ENCODE measurements at regions of chr11 and their contacts with region 1.

Region 1: DNA sequence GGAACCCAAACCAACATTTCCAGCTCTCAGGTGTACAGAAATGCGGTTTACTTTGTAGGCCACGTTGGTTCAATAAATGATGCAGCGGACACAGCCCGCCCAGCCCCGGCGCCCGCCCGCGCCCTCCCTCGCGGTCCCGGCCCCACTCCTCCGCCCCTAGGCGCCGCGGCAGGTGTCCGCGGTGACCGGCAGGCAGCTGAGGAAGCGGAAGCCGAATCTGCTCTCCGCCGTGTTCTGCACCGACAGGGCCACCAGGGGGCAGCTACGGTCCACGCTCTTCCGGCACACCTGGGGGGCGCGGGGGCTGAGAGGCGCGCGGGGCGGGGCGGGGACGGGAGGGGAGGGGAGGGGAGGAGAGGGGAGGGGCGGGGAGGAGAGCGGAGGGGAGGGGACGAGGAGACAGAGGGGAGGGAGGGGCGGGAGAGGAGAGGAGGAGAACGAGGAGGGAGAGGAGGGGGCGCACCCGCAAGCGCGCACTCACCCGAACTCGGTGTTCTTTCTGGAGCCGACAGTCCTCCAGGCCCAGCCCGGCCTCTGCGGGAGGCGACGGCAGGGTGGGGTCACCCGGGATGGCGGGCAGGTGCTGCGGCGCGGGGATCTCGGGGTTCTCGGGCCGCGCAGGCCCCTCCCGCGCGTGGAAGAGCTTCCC is 5.6 kb downstream of the LMNTD2 start:
- DNase-seq: peak; percentile 74
- H3K4me3 Mint-ChIP-seq: peak overlapping the region; percentile 39
- H3K27ac Mint-ChIP-seq: no peak overlapping the region
- H3K4me1 Mint-ChIP-seq: peaks cover 4% of the 10 kb centered on the region
- H3K27me3 Mint-ChIP-seq: peaks cover 3% of the 10 kb centered on the region

Region 2: GRCh38 chr11:568306-569157 is 13.6 kb after region 1 on chr11:
- CTCF ChIA-PET with region 1: interaction called, 18 read pairs
- intact Hi-C with region 1: loop called (anchors 1 kb)
- DNase-seq: peak; percentile 89
- H3K4me3 Mint-ChIP-seq: peak overlapping the region; percentile 71
- H3K27ac Mint-ChIP-seq: no peak overlapping the region
- H3K4me1 Mint-ChIP-seq: peaks cover 2% of the 10 kb centered on the region
- H3K27me3 Mint-ChIP-seq: no peaks in the 10 kb centered on the region

Region 3: DNA sequence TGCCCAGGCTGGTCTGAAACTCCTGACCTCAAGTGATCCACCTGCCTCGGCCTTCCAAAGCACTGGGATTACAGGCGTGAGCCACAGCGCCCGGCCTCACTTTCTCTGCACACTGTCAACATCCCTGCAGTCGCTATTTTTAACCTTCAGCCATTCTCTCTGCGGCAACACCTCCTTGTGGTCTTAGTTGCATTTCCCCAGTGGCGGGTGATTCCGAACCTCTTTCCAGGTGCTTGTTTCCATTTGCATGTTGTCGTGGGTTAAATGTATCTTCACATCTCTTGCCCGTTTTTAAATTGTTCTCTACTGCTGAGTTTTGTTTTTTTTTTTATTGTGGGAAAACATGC is 74.3 kb after region 1 on chr11:
- CTCF ChIA-PET with region 1: no interaction called
- intact Hi-C with region 1: loop called (anchors 2 kb)
- DNase-seq: peak; percentile 60
- H3K4me3 Mint-ChIP-seq: peak overlapping the region; percentile 11
- H3K27ac Mint-ChIP-seq: peak overlapping the region; percentile 5
- H3K4me1 Mint-ChIP-seq: peaks cover 21% of the 10 kb centered on the region
- H3K27me3 Mint-ChIP-seq: peaks cover 27% of the 10 kb centered on the region